ENCODE measurements at regions of chr21 and their contacts with region 1.

Region 1: GRCh38 chr21:46323227-46324128 is at the start of gene C21orf58:
- DNase-seq: peak; percentile 97
- H3K4me3 ChIP-seq: peak within 1 kb of the TSS; percentile 95 to 100
- H3K27ac ChIP-seq: peak within 1 kb of the TSS; percentile 96 to 99
- H3K4me1 ChIP-seq: peaks cover 12% of the 10 kb centered on the region
- H3K27me3 ChIP-seq: no peaks in the 10 kb centered on the region
- CTCF ChIP-seq: no peak
- POLR2A ChIP-seq: peak; percentile 12
- total RNA-seq, gene C21orf58: 4.0 to 8.9 TPM

Region 2: DNA sequence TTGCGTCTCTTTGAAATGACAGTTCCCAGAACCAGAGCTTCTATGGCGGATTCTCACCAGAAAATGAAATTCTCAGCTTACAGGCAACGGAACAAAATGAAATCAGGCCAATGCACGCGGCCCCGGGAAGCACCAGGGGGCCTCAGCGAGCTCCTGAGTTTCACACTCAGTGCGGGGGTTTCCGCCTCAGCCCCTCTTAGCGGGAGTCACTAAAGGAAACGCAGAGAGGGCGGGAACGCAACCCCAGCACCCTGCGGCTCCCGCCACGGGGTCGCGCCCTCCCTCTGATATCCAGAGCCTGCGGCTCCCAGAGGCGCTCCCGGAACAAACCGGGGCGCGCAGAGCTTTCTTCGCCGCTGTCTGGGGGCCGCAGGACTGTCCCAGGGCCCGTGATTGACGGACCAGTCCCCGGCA is 349.8 kb before region 1 on chr21:
- intact Hi-C with region 1: loop called (anchors 10 kb)
- DNase-seq: peak; percentile 43
- H3K4me3 ChIP-seq: peak overlapping the region; percentile 29 to 43
- H3K27ac ChIP-seq: peak overlapping the region; percentile 79 to 82
- H3K4me1 ChIP-seq: peaks cover 9% of the 10 kb centered on the region
- H3K27me3 ChIP-seq: no peaks in the 10 kb centered on the region
- CTCF ChIP-seq: peak in 3 of 4 experiments; percentile 19 to 60 (median 57)
- POLR2A ChIP-seq: no peak

Region 3: DNA sequence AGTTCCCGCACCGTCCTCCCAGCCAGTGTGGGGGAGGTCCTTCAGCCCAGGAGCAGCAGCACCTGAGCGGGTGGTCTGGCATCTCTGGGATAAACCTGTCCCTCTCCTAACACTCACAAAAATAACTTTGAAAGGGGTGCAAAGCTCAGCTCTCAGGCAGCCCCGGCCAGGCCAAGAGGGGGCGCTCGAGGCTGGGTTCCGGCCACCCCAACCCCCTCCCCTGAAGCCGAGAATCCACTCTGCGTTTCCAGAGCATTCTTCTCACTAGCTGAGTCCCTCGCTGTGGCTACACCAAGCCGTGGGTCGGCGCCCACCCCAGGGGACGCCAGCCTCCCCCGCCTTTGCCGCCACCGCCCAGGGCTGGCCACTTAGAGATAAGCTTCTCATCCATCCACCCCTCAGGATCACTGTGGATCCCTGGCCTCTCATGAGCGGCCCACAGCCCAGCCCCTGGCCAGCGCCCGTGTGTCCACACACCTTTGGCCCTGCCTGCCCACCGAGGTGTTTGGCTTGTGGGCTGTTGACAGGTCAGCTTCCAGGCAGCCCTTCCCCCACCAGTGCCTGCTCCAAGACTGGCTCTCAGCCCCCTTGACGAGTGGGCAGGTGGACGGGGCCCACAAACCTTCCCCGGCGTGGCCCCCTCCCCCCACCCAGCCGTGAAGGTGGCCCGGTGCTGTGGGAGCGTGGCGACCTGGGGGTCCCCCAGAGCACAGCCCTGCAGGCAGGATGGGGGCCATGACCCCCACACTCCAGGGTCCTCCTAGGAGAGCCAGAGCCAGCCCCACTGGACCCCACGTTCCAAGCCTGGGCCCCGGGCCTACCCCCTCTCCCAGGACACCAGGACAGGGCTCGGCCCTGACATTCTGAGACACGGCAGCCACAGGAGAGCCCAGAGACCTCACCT is 170.0 kb before region 1 on chr21:
- intact Hi-C with region 1: loop called (anchors 10 kb)
- DNase-seq: peak; percentile 58
- H3K4me3 ChIP-seq: peak overlapping the region; percentile 1 to 13
- H3K27ac ChIP-seq: peak overlapping the region; percentile 64 to 92
- H3K4me1 ChIP-seq: no peaks in the 10 kb centered on the region
- H3K27me3 ChIP-seq: no peaks in the 10 kb centered on the region
- CTCF ChIP-seq: peak; percentile 58 to 84 (median 72)
- POLR2A ChIP-seq: no peak

Region 4: DNA sequence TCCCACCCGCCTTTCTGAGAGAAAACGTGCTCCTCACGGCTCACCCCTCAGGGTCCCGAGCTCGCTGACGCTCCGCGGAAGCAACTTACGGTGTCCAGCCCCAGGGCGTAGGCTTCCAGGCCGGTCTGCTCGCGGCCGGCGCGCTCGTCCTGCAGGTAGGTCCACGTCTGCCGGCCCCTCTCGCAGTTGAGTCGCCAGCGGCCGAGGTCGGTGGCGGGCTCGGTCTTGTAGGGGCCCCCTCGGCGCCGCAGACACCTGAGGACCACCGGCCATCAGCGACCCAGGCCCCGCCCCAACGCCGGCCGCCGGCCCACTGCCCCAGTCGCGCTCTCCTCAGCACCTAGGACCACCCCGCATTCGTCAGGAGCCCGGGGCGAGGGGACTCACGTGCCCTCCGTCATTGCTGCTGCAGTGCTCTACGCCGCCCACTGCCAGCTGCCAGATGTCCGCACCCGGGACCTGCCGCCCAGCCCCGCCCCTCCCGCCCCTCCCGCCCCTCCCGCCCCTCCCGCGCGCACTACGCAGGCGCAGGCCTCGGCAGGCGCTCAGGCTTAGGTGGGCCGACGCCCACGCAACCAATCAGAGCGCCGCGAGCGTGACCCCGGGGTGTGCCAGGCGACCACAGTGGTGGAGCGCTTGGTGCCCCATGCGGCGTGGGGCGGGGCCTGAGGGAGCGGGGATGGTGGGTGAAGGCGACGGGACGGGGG is 95.0 kb before region 1 on chr21 and contains the start of gene LSS:
- intact Hi-C with region 1: loop called (anchors 5 kb)
- DNase-seq: peak; percentile 98
- H3K4me3 ChIP-seq: peak within 1 kb of the TSS; percentile 99
- H3K27ac ChIP-seq: peak within 1 kb of the TSS; percentile 97 to 98
- H3K4me1 ChIP-seq: peaks cover 5% of the 10 kb centered on the region
- H3K27me3 ChIP-seq: no peaks in the 10 kb centered on the region
- CTCF ChIP-seq: no peak
- POLR2A ChIP-seq: peak; percentile 73
- total RNA-seq, gene LSS: 95.5 to 145 TPM

Region 5: GRCh38 chr21:46285761-46286496 is 37.5 kb before region 1 on chr21 and contains the start of gene YBEY:
- intact Hi-C with region 1: loop called (anchors 5 kb)
- DNase-seq: peak; percentile 84
- H3K4me3 ChIP-seq: peak within 1 kb of the TSS; percentile 95 to 99
- H3K27ac ChIP-seq: peak within 1 kb of the TSS; percentile 93 to 94
- H3K4me1 ChIP-seq: peaks cover 7% of the 10 kb centered on the region
- H3K27me3 ChIP-seq: no peaks in the 10 kb centered on the region
- CTCF ChIP-seq: peak; percentile 15 to 66 (median 46)
- POLR2A ChIP-seq: peak; percentile 63
- total RNA-seq, gene YBEY: 28.5 to 30.0 TPM

Region 6: DNA sequence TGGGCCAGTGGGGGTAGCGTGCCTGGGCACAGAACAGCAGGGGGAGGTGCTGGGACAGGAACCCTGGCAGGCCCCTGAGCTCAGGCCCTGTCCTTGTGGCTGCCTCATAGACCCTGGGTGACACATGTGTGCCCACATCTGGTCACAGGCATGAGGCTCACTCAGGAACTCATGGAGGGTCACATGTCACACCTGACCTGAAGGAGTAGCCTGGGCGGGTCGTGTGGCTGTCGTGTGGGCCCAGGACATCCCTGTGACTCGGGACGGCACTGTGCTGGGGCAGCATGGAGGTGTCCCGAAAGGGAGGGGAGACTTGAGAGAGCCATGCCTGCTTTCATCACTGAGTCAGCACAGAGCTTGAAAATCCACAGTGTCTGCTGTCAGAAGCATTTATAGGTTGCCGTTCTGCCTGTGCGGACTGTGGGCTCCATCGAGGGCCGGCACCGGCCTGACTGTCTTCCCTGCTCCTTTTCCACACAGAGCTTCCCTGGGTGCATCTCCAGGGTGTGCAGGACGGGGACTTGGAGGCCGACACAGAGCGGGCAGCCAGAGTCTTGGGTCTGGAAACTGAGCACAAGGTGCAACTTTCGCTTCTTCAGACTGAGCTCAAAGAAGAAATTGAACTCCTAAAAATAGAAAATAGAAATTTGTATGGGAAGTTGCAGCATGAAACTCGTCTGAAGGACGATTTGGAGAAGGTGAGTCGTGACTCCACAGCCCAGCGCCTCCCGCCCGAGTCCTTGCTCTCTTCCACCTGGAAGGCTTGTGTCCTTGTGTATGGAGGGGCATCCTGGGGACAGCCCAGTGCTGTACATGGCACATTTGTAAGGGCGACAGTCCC is 33.2 kb after region 1 on chr21:
- intact Hi-C with region 1: no loop called
- DNase-seq: no peak
- H3K4me3 ChIP-seq: no peak overlapping the region
- H3K27ac ChIP-seq: no peak overlapping the region
- H3K4me1 ChIP-seq: no peaks in the 10 kb centered on the region
- H3K27me3 ChIP-seq: no peaks in the 10 kb centered on the region
- CTCF ChIP-seq: no peak
- POLR2A ChIP-seq: no peak

Region 7: DNA sequence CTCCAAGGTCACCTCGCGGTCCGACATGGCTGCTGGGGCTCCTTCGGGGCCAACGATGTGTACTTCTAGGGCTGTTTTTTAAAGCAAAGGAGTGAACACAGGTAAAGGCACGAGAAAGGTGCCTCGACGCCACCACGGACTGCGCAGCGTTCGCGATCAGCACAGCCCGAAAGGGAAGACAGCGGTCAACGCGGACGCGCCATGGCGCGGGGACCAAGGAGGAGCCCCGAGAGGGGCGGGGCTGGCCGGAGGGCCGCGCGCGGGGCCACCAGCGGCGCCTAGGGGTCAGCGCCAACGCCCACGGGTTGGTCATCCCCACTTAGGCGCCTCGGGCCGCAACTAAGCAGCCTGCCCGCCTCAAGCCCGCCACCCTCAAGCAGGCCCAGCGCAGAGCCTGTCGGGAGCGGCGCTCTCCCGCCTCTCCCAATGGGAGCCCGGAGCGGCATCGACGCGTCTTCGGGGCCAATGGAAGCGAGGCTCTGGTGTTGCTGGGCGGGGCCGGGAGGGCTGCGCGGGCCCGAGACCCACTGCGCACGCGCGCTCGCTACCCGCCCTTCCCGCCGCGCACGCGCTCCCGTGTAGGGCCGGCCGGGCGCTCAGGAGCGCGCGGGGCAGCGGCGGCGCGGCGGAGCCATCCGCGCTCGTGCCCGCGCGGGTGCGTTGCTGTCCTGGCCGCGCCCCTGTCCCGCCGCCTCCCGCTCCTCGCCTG is 135.0 kb after region 1 on chr21 and contains the start of gene DIP2A:
- intact Hi-C with region 1: loop called (anchors 5 kb)
- DNase-seq: peak; percentile 93
- H3K4me3 ChIP-seq: peak within 1 kb of the TSS; percentile 97 to 99
- H3K27ac ChIP-seq: peak within 1 kb of the TSS; percentile 86 to 87
- H3K4me1 ChIP-seq: no peaks in the 10 kb centered on the region
- H3K27me3 ChIP-seq: no peaks in the 10 kb centered on the region
- CTCF ChIP-seq: no peak
- POLR2A ChIP-seq: peak; percentile 88
- total RNA-seq, gene DIP2A: 44.2 to 82.2 TPM

Measured in prostate gland (tissue), 2 donors.